ENCODE measurements at regions of chr5 and their contacts with region 1.

Region 1: GRCh38 chr5:163529698-163530097 is 24.3 kb downstream of the MAT2B start:
- DNase-seq: no peak
- H3K4me3 Mint-ChIP-seq: no peak overlapping the region
- H3K27ac Mint-ChIP-seq: no peak overlapping the region
- H3K4me1 Mint-ChIP-seq: no peaks in the 10 kb centered on the region
- H3K27me3 Mint-ChIP-seq: no peaks in the 10 kb centered on the region

Region 2: GRCh38 chr5:163542771-163543170 is 13.1 kb after region 1 on chr5:
- CTCF ChIA-PET with region 1: interaction called, 8 read pairs
- intact Hi-C with region 1: loop called (anchors 1 kb)
- DNase-seq: no peak
- H3K4me3 Mint-ChIP-seq: no peak overlapping the region
- H3K27ac Mint-ChIP-seq: no peak overlapping the region
- H3K4me1 Mint-ChIP-seq: no peaks in the 10 kb centered on the region
- H3K27me3 Mint-ChIP-seq: peaks cover 8% of the 10 kb centered on the region

Region 3: GRCh38 chr5:164013077-164013670 is 483.5 kb after region 1 on chr5:
- CTCF ChIA-PET with region 1: no interaction called
- intact Hi-C with region 1: no loop called
- DNase-seq: peak; percentile 62
- H3K4me3 Mint-ChIP-seq: no peak overlapping the region
- H3K27ac Mint-ChIP-seq: no peak overlapping the region
- H3K4me1 Mint-ChIP-seq: no peaks in the 10 kb centered on the region
- H3K27me3 Mint-ChIP-seq: no peaks in the 10 kb centered on the region

Measured in activated naive CD4-positive, alpha-beta T cell treated with anti-CD3 and anti-CD28 coated beads for 36 hours (primary cell).